Activated B cell treated with CpG ODN at 0.5 μM for 24 hours (primary cell): ENCODE measurements at regions of chr15 and their contacts with region 1.

Region 1: GRCh38 chr15:41827880-41828806 is at the start of gene JMJD7:
- DNase-seq: peak; percentile 93
- ATAC-seq: peak; percentile 98
- H3K4me3 Mint-ChIP-seq: peak within 1 kb of the TSS; percentile 91
- H3K27ac Mint-ChIP-seq: peak within 1 kb of the TSS; percentile 73
- H3K4me1 Mint-ChIP-seq: peaks cover 21% of the 10 kb centered on the region
- H3K27me3 Mint-ChIP-seq: no peaks in the 10 kb centered on the region
- CTCF ChIP-seq: no peak
- total RNA-seq, gene JMJD7: 12.1 and 16.5 TPM in 2 replicates

Region 2: GRCh38 chr15:41544650-41545015 is 283.5 kb before region 1 on chr15:
- CTCF ChIA-PET with region 1: no interaction called
- POLR2A ChIA-PET with region 1: no interaction called
- intact Hi-C with region 1: no loop called
- DNase-seq: no peak
- ATAC-seq: no peak
- H3K4me3 Mint-ChIP-seq: peak overlapping the region; percentile 97
- H3K27ac Mint-ChIP-seq: peak overlapping the region; percentile 44
- H3K4me1 Mint-ChIP-seq: peaks cover 16% of the 10 kb centered on the region
- H3K27me3 Mint-ChIP-seq: no peaks in the 10 kb centered on the region
- CTCF ChIP-seq: no peak

Region 3: GRCh38 chr15:41660235-41661077 is 167.7 kb before region 1 on chr15 and contains the start of gene MGA:
- CTCF ChIA-PET with region 1: no interaction called
- POLR2A ChIA-PET with region 1: no interaction called
- intact Hi-C with region 1: loop called (anchors 1 kb)
- DNase-seq: peak; percentile 92
- ATAC-seq: peak; percentile 84
- H3K4me3 Mint-ChIP-seq: peak within 1 kb of the TSS; percentile 91
- H3K27ac Mint-ChIP-seq: peak within 1 kb of the TSS; percentile 91
- H3K4me1 Mint-ChIP-seq: peaks cover 51% of the 10 kb centered on the region
- H3K27me3 Mint-ChIP-seq: peaks cover 2% of the 10 kb centered on the region
- CTCF ChIP-seq: no peak
- total RNA-seq, gene MGA: 49.9 and 58.3 TPM in 2 replicates

Region 4: DNA sequence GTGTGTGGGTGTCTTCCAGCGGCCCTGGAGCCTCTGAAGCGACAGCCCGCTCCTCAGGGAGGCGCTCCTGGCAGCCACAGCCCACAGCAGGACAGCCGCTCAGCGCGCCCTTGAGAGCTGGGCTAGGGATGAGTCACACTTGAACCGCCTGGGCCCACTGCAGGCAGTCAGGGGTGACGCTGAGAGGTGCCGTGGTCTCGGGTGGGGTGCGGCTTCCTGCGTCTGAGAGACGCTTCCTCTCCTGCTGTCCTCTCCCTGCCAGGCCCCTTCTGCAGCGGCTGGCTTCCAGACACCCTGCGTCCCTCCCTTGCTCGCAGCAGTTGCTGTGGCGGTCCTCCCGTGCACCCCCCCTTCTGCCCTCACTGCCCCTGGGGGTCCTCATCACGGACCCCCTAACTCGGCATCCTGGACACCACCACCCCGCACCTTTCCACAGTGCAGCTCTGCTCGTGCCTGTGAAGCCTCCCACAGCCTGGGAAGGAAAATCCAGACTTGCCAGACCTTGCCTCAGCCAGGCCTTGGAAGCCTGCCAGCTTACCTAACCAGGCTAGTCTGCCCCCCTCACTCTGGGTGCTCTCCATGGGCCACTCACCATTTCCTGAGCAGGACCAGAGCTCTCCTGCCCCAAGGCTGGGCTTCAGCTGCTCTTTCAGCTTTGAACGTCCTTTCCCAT is 66.8 kb after region 1 on chr15:
- CTCF ChIA-PET with region 1: interaction called, 3 read pairs
- POLR2A ChIA-PET with region 1: no interaction called
- intact Hi-C with region 1: loop called (anchors 2 kb)
- DNase-seq: peak; percentile 68
- ATAC-seq: peak; percentile 99
- H3K4me3 Mint-ChIP-seq: peak overlapping the region; percentile 79
- H3K27ac Mint-ChIP-seq: peak overlapping the region; percentile 81
- H3K4me1 Mint-ChIP-seq: peaks cover 44% of the 10 kb centered on the region
- H3K27me3 Mint-ChIP-seq: no peaks in the 10 kb centered on the region
- CTCF ChIP-seq: no peak

Region 5: GRCh38 chr15:41930221-41930866 is 102.2 kb after region 1 on chr15:
- CTCF ChIA-PET with region 1: no interaction called
- POLR2A ChIA-PET with region 1: interaction called, 3 read pairs
- intact Hi-C with region 1: loop called (anchors 1 kb)
- DNase-seq: no peak
- ATAC-seq: no peak
- H3K4me3 Mint-ChIP-seq: peak overlapping the region; percentile 65
- H3K27ac Mint-ChIP-seq: peak overlapping the region; percentile 88
- H3K4me1 Mint-ChIP-seq: peaks cover 86% of the 10 kb centered on the region
- H3K27me3 Mint-ChIP-seq: no peaks in the 10 kb centered on the region
- CTCF ChIP-seq: no peak

Region 6: GRCh38 chr15:41944313-41944940 is 116.3 kb after region 1 on chr15:
- CTCF ChIA-PET with region 1: no interaction called
- POLR2A ChIA-PET with region 1: no interaction called
- intact Hi-C with region 1: no loop called
- DNase-seq: no peak
- ATAC-seq: no peak
- H3K4me3 Mint-ChIP-seq: no peak overlapping the region
- H3K27ac Mint-ChIP-seq: no peak overlapping the region
- H3K4me1 Mint-ChIP-seq: no peaks in the 10 kb centered on the region
- H3K27me3 Mint-ChIP-seq: no peaks in the 10 kb centered on the region
- CTCF ChIP-seq: no peak

Region 7: DNA sequence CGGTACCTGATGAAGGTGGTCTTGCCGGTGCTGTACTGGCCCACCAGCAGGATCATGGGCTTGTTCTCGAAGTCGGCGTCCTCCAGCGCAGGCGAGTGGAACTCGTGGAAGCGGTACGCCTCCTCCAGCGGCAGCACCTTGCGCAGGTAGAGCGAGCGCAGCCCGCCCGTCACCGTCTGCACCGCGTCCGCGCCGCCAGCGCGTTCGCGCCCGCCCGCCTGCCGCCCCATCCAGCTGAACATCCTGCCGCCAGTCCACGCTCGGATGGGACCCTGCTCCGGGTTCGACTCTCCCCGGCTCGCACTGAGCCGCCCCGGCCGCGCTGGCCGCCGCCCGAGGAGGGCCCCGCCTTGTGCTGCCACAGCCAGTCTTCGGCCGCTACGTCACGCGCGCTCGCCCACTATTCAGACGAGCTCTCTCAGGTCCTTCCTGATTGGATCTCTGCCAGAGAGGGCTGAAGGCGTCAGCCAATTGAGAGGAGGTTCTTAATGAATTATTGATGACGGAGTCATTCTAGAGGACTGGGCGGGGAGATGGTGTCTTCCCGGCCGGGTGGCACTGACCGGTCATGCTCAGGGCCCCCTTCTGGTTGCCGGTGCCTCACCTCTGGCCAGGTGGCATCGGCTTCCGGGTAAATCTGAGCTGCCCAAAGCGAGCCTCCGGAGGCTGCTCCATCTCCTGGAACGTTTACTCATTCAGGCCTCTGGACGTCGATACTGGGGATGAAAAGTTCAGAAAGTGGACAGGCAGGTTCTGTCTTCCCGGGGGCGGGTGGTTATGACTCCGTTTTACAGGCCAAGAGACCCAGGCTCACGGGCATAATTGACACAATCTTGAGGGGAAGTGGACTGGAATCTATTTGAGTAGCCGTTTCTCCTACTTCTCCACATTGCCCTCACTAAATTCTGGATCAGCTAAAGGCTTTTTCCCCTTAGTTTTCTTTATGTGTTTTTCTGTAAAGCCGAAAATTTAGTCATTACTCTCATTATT is 144.4 kb after region 1 on chr15 and contains the start of gene EHD4:
- CTCF ChIA-PET with region 1: no interaction called
- POLR2A ChIA-PET with region 1: no interaction called
- intact Hi-C with region 1: loop called (anchors 1 kb)
- DNase-seq: peak; percentile 88
- ATAC-seq: peak; percentile 84
- H3K4me3 Mint-ChIP-seq: peak within 1 kb of the TSS; percentile 93
- H3K27ac Mint-ChIP-seq: peak within 1 kb of the TSS; percentile 90
- H3K4me1 Mint-ChIP-seq: peaks cover 46% of the 10 kb centered on the region
- H3K27me3 Mint-ChIP-seq: peaks cover 7% of the 10 kb centered on the region
- CTCF ChIP-seq: no peak
- total RNA-seq, gene EHD4: 38.4 and 42.6 TPM in 2 replicates

Region 8: GRCh38 chr15:42147431-42147735 is 319.2 kb after region 1 on chr15:
- CTCF ChIA-PET with region 1: no interaction called
- POLR2A ChIA-PET with region 1: no interaction called
- intact Hi-C with region 1: no loop called
- DNase-seq: peak; percentile 1
- ATAC-seq: no peak
- H3K4me3 Mint-ChIP-seq: no peak overlapping the region
- H3K27ac Mint-ChIP-seq: no peak overlapping the region
- H3K4me1 Mint-ChIP-seq: no peaks in the 10 kb centered on the region
- H3K27me3 Mint-ChIP-seq: peaks cover 4% of the 10 kb centered on the region
- CTCF ChIP-seq: no peak

Region 9: DNA sequence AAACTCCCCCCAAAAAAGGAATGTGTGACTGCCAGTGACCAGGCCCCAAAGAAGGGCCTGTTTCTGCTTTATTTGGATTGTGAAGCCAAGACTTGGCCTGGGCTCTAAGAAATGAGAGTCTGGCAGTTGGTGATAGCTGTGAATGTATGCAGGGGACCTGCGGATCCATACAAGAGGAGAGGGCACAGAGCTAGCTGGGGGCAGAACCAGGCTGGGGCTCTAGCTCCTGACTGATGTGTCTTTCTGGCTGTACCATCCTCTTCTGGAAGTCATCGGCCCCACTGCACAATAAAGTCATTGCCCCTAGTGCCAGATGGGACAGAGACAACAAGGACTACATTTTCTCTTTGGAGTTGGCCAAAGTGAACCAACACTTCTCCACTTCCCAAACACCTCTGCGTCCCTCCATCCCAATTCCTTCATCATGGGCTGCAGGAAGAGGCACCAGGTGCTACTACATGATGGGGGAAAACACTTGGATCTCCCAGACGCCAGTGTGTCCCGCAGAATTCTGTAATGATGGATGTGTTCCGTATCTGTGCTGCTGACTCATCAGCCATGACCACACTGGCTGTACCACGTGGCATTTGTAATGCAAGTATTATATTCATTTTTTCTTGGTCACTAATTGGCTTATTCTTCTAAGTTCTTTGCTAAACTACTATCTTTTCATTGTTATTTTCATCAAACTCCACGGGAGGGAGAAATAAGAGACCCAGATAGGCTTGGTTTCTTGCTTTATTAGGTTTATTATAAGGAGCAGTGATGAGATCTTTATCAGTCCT is 330.0 kb after region 1 on chr15:
- CTCF ChIA-PET with region 1: no interaction called
- POLR2A ChIA-PET with region 1: no interaction called
- intact Hi-C with region 1: no loop called
- DNase-seq: no peak
- ATAC-seq: no peak
- H3K4me3 Mint-ChIP-seq: no peak overlapping the region
- H3K27ac Mint-ChIP-seq: no peak overlapping the region
- H3K4me1 Mint-ChIP-seq: no peaks in the 10 kb centered on the region
- H3K27me3 Mint-ChIP-seq: no peaks in the 10 kb centered on the region
- CTCF ChIP-seq: no peak